ENCODE measurements at regions of chr3 and their contacts with region 1.

Region 1: GRCh38 chr3:161423911-161424522 is 52.7 kb upstream of the SPTSSB start:
- DNase-seq: peak; percentile 64
- H3K4me3 Mint-ChIP-seq: no peak overlapping the region
- H3K27ac Mint-ChIP-seq: no peak overlapping the region
- H3K4me1 Mint-ChIP-seq: peaks cover 8% of the 10 kb centered on the region
- H3K27me3 Mint-ChIP-seq: no peaks in the 10 kb centered on the region
- CTCF ChIP-seq: peak; percentile 44

Region 2: DNA sequence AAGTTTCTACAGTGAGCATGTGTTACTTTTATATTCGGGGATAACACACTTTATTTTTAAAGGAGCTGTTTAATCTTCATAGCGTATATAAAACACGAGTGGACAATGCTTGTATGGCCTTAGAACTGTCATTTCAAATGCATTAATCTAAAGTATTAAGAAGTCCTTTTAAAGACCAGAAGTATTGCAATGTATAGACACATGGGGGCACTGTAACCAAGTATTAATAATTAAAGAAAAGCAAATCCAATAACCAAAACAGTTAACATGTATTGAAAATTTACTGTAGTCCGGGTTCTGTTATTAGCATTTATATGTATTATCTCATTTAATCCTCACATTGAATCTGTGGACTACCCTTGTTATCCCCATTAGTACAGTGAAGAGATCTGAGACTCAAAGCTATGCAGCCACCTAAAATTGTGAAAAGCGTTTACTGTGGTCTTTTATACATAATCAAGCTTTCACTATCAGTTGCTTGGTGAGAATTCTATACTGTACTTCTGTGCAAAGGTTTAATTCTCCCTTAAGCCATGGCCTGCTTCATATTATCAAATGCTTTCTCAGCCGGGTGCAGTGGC is 737.0 kb before region 1 on chr3:
- CTCF ChIA-PET with region 1: interaction called, 6 read pairs
- POLR2A ChIA-PET with region 1: no interaction called
- intact Hi-C with region 1: loop called (anchors 5 kb)
- DNase-seq: peak; percentile 30
- H3K4me3 Mint-ChIP-seq: no peak overlapping the region
- H3K27ac Mint-ChIP-seq: no peak overlapping the region
- H3K4me1 Mint-ChIP-seq: no peaks in the 10 kb centered on the region
- H3K27me3 Mint-ChIP-seq: no peaks in the 10 kb centered on the region
- CTCF ChIP-seq: peak; percentile 24

Region 3: DNA sequence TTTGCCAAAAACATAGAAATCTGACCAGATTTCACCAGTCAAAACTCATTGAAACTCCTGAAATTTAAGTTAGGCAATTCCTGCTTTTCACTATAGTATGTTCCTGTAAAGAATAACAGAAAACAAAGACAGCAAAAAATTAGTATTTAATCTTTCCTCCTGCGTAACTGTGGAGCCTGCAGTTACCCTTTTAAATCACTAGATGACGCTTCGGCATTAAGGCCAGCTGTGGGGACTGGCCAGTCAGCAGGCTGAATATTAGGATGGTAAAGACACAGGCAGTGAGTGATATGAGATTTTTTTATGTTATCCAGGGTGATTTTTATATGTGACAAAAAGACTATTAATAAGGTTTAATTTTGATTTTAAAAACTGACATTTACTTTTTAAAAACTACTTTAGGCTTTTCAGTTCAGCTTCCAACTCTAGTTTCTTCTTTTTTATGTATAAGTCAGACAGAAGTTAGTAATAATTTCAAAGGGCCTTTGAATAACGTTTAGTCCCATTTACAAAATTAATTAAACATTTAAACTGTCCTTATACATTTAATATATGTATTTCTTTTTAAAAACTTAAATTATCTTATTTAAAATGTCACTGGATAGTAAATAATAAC is 502.9 kb before region 1 on chr3:
- CTCF ChIA-PET with region 1: no interaction called
- POLR2A ChIA-PET with region 1: no interaction called
- intact Hi-C with region 1: loop called (anchors 2 kb)
- DNase-seq: peak; percentile 52
- H3K4me3 Mint-ChIP-seq: no peak overlapping the region
- H3K27ac Mint-ChIP-seq: no peak overlapping the region
- H3K4me1 Mint-ChIP-seq: no peaks in the 10 kb centered on the region
- H3K27me3 Mint-ChIP-seq: no peaks in the 10 kb centered on the region
- CTCF ChIP-seq: peak; percentile 71

Region 4: GRCh38 chr3:161096771-161097355 is 327.2 kb before region 1 on chr3:
- CTCF ChIA-PET with region 1: interaction called, 4 read pairs
- POLR2A ChIA-PET with region 1: no interaction called
- intact Hi-C with region 1: loop called (anchors 2 kb)
- DNase-seq: peak; percentile 42
- H3K4me3 Mint-ChIP-seq: no peak overlapping the region
- H3K27ac Mint-ChIP-seq: no peak overlapping the region
- H3K4me1 Mint-ChIP-seq: no peaks in the 10 kb centered on the region
- H3K27me3 Mint-ChIP-seq: no peaks in the 10 kb centered on the region
- CTCF ChIP-seq: peak; percentile 41

Region 5: DNA sequence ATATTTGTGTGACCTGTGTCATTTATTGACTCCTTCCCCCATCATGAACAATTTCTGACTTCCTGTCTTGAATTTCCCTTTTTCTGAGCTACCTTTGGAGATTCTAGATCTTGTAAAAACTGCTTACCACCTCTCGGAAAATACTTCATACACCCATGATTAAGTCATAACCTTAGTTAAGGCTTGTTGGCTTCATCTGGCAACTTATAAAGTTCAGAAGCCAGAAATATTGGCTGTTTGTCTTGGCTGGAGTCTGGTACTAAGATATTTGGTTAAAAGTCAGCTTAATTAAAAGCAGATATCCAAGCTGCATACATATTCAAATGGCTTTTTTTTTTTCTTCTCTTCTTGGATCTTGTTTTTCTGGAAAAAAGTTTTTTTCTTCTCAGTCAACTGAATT is 281.5 kb before region 1 on chr3:
- CTCF ChIA-PET with region 1: no interaction called
- POLR2A ChIA-PET with region 1: no interaction called
- intact Hi-C with region 1: no loop called
- DNase-seq: no peak
- H3K4me3 Mint-ChIP-seq: no peak overlapping the region
- H3K27ac Mint-ChIP-seq: no peak overlapping the region
- H3K4me1 Mint-ChIP-seq: no peaks in the 10 kb centered on the region
- H3K27me3 Mint-ChIP-seq: no peaks in the 10 kb centered on the region
- CTCF ChIP-seq: no peak

Region 6: GRCh38 chr3:161187046-161187445 is 237.0 kb before region 1 on chr3:
- CTCF ChIA-PET with region 1: no interaction called
- POLR2A ChIA-PET with region 1: no interaction called
- intact Hi-C with region 1: no loop called
- DNase-seq: no peak
- H3K4me3 Mint-ChIP-seq: no peak overlapping the region
- H3K27ac Mint-ChIP-seq: no peak overlapping the region
- H3K4me1 Mint-ChIP-seq: no peaks in the 10 kb centered on the region
- H3K27me3 Mint-ChIP-seq: no peaks in the 10 kb centered on the region
- CTCF ChIP-seq: no peak

Measured in MCF 10A (cell line).